Activated naive CD4-positive, alpha-beta T cell treated with anti-CD3 and anti-CD28 coated beads for 36 hours (primary cell): ENCODE measurements at regions of chr4 and their contacts with region 1.

Region 1: DNA sequence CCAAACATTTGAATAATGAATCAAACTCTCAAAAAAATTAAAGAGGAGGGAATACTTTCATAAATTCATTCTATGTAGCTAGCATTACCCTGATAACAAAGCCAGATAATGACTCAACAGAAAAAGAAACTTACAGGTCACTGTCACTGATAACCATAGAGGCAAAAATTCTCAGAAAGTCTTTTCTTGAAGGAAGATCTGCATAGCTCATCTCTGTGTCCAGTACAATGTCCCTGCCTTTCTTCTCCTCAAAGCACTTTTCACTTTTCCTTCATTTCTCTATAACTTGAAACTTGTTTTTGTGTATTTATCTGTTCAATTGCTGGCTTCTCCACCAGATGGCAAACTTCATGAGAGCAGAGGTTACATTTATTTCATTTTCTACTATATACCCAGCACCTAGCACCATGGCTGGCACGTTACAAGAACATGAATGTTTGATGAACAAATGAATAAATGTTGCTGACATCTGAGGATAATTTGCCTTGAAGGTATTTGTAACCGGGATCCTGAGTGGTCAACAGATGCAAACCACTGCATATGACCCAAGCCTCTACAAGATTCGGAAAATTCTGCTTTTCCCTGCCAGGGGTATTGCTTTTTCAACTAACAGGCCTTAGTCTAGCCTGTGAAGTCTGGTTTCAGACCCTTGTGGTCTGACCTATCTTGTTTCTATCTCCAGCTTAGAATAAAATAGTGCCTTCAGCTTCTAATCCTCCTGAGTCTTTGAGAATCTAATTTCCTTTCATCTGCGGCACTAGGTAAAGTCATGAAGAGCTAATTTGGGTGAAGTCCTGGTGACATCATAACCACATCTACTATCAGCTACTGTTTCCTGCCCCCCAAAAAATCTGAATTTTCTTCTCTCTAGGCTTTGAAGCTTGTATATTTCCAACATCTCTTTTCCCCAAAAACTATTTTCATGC is 52.5 kb upstream of the ANTXR2 start:
- DNase-seq: peak; percentile 39
- H3K4me3 Mint-ChIP-seq: no peak overlapping the region
- H3K27ac Mint-ChIP-seq: peak overlapping the region; percentile 17
- H3K4me1 Mint-ChIP-seq: peaks cover 49% of the 10 kb centered on the region
- H3K27me3 Mint-ChIP-seq: no peaks in the 10 kb centered on the region

Region 2: DNA sequence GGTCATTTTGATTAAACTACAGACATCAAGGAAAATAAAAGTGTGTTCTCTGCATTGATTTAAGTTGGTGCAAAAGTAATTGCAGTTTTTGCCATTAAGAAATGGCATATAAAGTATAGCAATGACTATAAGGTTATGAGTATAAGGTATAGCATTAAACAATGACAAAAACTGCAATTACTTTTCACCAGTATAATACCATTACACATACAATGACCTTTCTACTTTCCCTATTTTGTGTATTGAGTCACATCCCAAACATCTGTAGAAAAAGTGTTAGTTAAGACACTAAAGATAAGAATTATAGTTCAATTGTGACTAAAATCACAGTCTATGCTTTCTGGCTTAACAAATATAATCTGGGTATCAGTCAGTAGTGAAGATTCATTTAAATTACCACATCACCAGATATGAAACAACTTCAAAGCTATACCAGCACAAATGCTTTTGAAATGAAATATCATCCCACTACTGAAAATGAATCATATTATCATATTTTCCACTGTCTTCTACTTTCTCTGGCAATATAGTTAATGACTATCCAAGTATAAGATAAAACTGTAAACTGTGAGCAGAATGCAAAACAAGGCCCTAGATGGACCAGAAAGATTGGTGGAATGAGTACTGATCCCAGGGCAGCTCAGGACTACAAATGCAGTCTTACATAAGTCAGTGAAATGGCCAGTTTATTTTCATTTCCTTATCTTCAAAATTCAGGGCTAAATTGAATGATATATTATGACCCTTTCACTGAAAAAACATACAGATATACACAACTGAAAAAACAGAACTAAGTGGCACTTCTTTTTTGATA is 293.6 kb before region 1 on chr4:
- CTCF ChIA-PET with region 1: no interaction called
- intact Hi-C with region 1: loop called (anchors 2 kb)
- DNase-seq: no peak
- H3K4me3 Mint-ChIP-seq: no peak overlapping the region
- H3K27ac Mint-ChIP-seq: no peak overlapping the region
- H3K4me1 Mint-ChIP-seq: peaks cover 12% of the 10 kb centered on the region
- H3K27me3 Mint-ChIP-seq: peaks cover 8% of the 10 kb centered on the region

Region 3: DNA sequence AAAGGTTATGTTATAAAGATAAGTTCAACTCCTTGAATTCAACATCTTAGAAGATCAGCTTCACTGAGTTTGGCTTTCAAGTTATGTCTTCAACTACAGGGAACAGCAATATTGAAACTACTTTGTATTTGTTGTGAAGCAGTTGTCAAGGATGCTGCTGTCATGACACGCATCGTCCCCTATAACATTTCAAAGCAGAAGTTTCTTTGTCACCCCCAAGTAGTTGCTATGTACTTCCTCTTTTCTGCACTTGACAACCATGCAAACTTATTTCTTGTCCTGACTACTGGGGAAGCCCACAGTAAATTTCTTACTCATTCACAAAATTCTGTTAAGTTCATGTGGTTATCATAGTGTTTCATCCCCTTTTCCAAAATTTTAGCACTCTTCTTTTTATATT is 66.8 kb before region 1 on chr4:
- CTCF ChIA-PET with region 1: interaction called, 4 read pairs
- intact Hi-C with region 1: loop called (anchors 1 kb)
- DNase-seq: peak; percentile 67
- H3K4me3 Mint-ChIP-seq: peak overlapping the region; percentile 71
- H3K27ac Mint-ChIP-seq: peak overlapping the region; percentile 86
- H3K4me1 Mint-ChIP-seq: peaks cover 42% of the 10 kb centered on the region
- H3K27me3 Mint-ChIP-seq: no peaks in the 10 kb centered on the region

Region 4: GRCh38 chr4:80173401-80173800 is 47.9 kb after region 1 on chr4:
- CTCF ChIA-PET with region 1: interaction called, 13 read pairs
- intact Hi-C with region 1: loop called (anchors 1 kb)
- DNase-seq: peak; percentile 79
- H3K4me3 Mint-ChIP-seq: no peak overlapping the region
- H3K27ac Mint-ChIP-seq: peak overlapping the region; percentile 46
- H3K4me1 Mint-ChIP-seq: peaks cover 51% of the 10 kb centered on the region
- H3K27me3 Mint-ChIP-seq: no peaks in the 10 kb centered on the region

Region 5: DNA sequence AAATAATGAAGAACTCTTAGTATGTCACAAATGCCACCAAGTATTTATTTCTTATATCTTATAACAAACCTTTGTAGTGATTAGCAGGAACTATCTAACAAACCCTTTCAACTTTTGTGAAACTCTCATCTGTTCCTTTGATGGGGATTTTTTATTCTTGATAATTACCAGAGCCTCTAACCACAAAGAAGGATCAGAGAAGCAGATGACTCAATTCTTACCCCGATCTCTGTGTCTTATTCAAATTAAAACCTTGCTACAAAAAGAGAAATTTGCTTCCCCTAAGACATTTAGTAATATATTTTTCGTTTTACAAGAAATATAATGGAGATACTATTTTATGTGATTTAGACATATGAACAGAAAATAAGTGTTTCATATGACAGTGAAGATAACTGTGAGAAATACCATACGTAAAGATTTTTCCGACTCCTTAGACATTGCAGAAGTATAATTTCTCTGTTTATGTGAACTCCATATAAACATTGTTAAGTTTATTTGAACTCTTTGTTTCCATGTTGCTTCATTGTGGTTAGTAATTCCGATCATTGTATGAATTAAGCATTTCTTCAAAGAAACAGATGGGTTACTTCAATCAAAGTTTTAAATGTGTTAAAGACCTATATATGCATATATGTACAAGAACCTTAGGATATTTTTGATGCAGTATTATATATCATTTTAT is 415.4 kb after region 1 on chr4:
- CTCF ChIA-PET with region 1: no interaction called
- intact Hi-C with region 1: loop called (anchors 5 kb)
- DNase-seq: no peak
- H3K4me3 Mint-ChIP-seq: no peak overlapping the region
- H3K27ac Mint-ChIP-seq: peak overlapping the region; percentile 41
- H3K4me1 Mint-ChIP-seq: peaks cover 48% of the 10 kb centered on the region
- H3K27me3 Mint-ChIP-seq: peaks cover 34% of the 10 kb centered on the region